Endothelial cell of umbilical vein (primary cell): ENCODE measurements at regions of chr11 and their contacts with region 1.

Region 1: DNA sequence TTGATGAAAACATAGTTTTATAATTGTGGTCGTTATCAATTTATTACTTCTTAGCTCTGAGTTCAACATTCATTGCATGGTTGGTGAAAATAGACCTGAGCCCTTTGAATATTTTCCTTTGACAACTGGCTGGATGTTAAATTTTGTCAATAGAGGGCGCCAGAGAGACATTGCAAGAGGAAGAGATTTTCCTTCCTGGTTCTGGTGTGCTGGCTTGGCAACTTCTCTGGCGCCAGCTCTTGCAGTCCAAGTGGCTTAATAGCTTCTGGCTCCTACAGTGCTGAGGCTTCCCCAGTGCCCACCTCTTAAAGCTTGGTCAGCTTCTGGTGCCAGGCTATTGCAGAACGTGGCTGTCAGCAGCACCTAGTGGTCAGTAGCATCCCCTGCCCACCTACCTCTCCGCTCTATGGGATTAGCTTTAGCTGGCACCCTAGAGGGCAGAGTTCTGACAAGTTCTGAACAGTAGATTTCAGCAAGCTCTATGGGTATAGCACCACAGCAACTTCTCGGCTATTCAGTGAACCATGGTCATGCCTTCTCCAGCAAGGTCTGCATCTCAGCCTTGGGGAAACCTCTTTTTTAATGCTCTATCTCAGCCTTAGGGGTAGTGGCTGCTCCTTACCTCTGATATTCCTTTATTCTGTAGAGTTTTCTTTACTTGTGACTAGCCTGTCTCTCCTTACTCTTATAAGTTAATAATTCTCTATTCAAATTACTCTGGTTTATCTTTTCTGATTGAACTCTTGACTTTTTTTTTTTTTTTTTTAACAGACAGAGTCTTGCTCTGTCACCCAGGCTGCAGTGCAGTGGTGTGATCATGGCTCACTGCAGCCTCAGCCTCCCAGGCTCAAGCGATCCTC is 59.4 kb downstream of the ACER3 start:
- DNase-seq: peak; percentile 77
- H3K4me3 ChIP-seq: no peak overlapping the region
- H3K27ac ChIP-seq: no peak overlapping the region
- H3K4me1 ChIP-seq: peaks cover 7% of the 10 kb centered on the region
- H3K27me3 ChIP-seq: no peaks in the 10 kb centered on the region
- CTCF ChIP-seq: peak; percentile 70 to 77
- POLR2A ChIP-seq: no peak

Region 2: DNA sequence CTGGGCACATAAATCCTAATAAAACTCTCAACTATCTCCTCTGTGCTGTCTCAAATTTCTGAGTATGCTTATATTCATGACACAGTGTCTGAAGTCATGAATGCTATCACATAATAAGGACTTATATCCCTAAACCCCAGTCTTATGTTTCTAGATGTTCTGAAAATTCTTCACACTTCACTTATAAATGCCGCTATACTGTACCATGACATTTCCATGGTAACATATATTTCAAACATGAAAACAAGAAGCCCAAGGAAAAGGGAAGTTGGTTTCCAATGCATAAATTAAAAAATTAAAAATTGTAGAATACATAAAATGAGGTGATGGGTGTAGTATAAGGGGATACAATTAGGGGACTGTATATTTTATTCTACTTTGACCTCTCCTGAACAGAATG is 527.2 kb before region 1 on chr11:
- CTCF ChIA-PET with region 1: no interaction called
- POLR2A ChIA-PET with region 1: no interaction called
- dilution Hi-C with region 1: no loop called
- intact Hi-C with region 1: no loop called
- DNase-seq: no peak
- H3K4me3 ChIP-seq: no peak overlapping the region
- H3K27ac ChIP-seq: no peak overlapping the region
- H3K4me1 ChIP-seq: no peaks in the 10 kb centered on the region
- H3K27me3 ChIP-seq: peaks cover 0 to 3% of the 10 kb centered on the region in 2 experiments
- CTCF ChIP-seq: no peak
- POLR2A ChIP-seq: no peak

Region 3: DNA sequence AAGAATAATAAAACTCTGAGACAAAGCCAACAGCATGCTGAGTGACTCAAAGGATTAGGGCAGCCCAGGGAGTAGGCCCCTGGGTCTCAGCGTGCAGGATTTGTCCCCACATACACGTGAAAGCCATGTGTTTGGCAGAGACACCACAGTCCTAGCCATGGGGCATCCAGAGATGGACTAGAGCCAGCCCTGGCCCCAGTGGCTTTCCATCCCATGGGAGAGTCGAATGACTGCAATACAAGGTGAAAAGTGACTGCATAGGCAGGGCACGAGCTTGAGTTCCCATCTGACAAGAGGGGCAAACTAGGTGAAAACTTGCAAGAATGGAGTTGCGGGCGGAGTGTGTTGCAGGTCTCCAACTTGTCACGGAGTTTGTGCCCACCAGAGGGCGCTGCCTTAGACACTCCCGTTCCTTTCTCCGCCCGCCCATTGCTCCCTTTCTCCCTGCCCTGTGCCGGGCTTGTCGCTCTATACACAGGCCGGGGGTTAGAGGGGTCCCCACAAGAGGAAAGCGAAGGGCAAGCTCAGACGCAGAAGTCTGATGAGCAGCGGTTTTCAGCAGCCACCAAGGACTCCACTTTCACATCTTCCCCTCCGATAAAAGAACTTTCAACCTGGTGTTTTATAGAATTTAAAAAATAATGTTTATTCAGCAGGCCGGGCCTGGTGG is 112.8 kb before region 1 on chr11:
- CTCF ChIA-PET with region 1: interaction called, 338 read pairs
- POLR2A ChIA-PET with region 1: no interaction called
- dilution Hi-C with region 1: loop called (anchors 25 kb)
- intact Hi-C with region 1: loop called (anchors 1 kb)
- DNase-seq: peak; percentile 76
- H3K4me3 ChIP-seq: no peak overlapping the region
- H3K27ac ChIP-seq: no peak overlapping the region
- H3K4me1 ChIP-seq: peaks cover 3% of the 10 kb centered on the region
- H3K27me3 ChIP-seq: no peaks in the 10 kb centered on the region
- CTCF ChIP-seq: peak; percentile 80 to 87
- POLR2A ChIP-seq: no peak

Region 4: DNA sequence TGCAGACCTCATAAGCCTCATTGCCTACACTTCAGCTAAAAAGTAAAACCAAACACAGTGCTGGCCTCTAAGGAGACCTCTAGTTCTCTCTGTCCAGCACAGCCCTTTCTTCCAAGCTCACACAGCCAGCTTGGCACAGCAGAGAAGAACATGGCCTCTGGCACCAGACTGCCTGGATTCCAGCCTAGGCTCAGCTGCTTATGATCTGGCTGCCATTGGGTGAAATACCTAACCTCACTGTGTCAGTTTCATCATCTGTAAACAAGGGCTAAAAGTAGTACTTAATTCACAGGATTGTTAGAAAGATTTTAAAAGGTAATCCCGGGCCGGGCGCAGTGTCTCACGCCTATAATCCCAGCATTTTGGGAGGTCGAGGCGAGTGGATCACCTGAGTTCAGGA is 69.3 kb before region 1 on chr11:
- CTCF ChIA-PET with region 1: interaction called, 39 read pairs
- POLR2A ChIA-PET with region 1: no interaction called
- dilution Hi-C with region 1: no loop called
- intact Hi-C with region 1: no loop called
- DNase-seq: no peak
- H3K4me3 ChIP-seq: no peak overlapping the region
- H3K27ac ChIP-seq: no peak overlapping the region
- H3K4me1 ChIP-seq: no peaks in the 10 kb centered on the region
- H3K27me3 ChIP-seq: no peaks in the 10 kb centered on the region
- CTCF ChIP-seq: no peak
- POLR2A ChIP-seq: no peak

Region 5: GRCh38 chr11:76885390-76886097 is 34.6 kb before region 1 on chr11:
- CTCF ChIA-PET with region 1: interaction called, 71 read pairs
- POLR2A ChIA-PET with region 1: no interaction called
- dilution Hi-C with region 1: no loop called
- intact Hi-C with region 1: loop called (anchors 2 kb)
- DNase-seq: peak; percentile 96
- H3K4me3 ChIP-seq: no peak overlapping the region
- H3K27ac ChIP-seq: peak overlapping the region; percentile 54
- H3K4me1 ChIP-seq: peaks cover 35% of the 10 kb centered on the region
- H3K27me3 ChIP-seq: no peaks in the 10 kb centered on the region
- CTCF ChIP-seq: no peak
- POLR2A ChIP-seq: no peak

Region 6: DNA sequence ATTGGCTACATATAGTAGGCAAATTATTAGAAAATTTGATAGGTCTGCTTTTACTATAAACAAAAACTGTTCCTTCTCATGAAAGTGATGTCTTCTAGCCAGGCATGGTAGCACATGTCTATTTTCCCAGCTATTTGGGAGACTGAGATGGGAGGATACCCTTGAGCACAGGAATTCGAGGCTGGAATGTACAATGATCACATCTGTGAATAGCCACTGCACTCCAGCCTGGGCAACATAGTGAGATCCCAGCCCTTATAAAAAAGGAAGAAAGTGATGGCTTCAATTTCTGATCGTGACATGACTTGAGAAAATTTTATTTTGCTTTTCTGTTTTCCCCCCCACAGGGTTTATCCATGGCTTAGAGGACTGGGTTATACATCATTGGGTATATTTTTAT is 94.6 kb after region 1 on chr11:
- CTCF ChIA-PET with region 1: interaction called, 14 read pairs
- POLR2A ChIA-PET with region 1: no interaction called
- dilution Hi-C with region 1: no loop called
- intact Hi-C with region 1: no loop called
- DNase-seq: no peak
- H3K4me3 ChIP-seq: no peak overlapping the region
- H3K27ac ChIP-seq: no peak overlapping the region
- H3K4me1 ChIP-seq: peaks cover 7% of the 10 kb centered on the region
- H3K27me3 ChIP-seq: no peaks in the 10 kb centered on the region
- CTCF ChIP-seq: no peak
- POLR2A ChIP-seq: no peak

Region 7: GRCh38 chr11:77047007-77047927 is 127.2 kb after region 1 on chr11:
- CTCF ChIA-PET with region 1: interaction called, 62 read pairs
- POLR2A ChIA-PET with region 1: no interaction called
- dilution Hi-C with region 1: no loop called
- intact Hi-C with region 1: no loop called
- DNase-seq: peak; percentile 97
- H3K4me3 ChIP-seq: peak overlapping the region; percentile 28 to 36 (median 31)
- H3K27ac ChIP-seq: no peak overlapping the region
- H3K4me1 ChIP-seq: peaks cover 5% of the 10 kb centered on the region
- H3K27me3 ChIP-seq: peaks cover 4 to 10% of the 10 kb centered on the region in 2 experiments
- CTCF ChIP-seq: peak; percentile 48 to 59
- POLR2A ChIP-seq: no peak

Region 8: DNA sequence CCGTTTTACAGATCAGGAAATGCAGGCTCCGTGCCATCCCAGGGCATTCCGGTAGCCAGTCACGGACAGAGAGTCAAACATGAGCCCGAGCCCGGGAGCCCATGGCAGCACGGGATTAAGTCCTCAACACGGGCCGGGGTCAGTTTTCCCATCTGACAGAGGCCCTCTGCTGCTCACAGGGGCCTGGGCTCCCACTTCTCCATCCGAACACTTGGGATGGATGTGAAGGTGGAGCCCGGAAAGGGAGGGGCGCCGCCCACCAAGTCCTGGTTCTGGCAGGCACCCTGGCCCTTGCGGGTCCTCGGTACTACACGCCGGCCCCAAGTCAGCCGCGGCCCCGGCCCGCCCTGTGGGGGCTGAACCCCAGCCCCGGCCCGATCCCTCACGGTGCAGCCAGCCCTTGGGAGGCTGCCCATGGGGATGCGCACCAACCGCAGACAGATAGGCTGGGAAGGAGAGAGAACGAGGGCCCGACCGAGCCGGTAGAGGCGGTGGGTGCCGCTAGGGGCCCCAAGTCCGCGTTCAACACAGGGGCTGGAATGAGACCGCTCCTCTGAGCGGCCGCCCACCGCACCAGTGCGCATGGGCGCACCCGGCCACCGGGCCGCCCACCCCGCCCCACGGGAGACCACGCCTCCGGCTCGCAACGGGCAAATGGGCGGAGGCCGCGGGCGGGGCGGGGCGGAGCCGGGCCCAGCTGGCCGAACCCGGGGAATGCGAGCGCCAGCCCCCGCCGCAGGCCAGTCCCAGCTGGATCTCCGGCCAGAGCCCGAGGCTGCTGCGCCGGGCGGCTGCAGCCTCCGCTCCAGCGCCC is 146.3 kb after region 1 on chr11 and contains the start of gene CAPN5:
- CTCF ChIA-PET with region 1: no interaction called
- POLR2A ChIA-PET with region 1: no interaction called
- dilution Hi-C with region 1: no loop called
- intact Hi-C with region 1: no loop called
- DNase-seq: peak; percentile 95
- H3K4me3 ChIP-seq: peak within 1 kb of the TSS; percentile 48 to 75 (median 62)
- H3K27ac ChIP-seq: no peak within 1 kb of the TSS
- H3K4me1 ChIP-seq: peaks cover 11% of the 10 kb centered on the region
- H3K27me3 ChIP-seq: no peaks in the 10 kb centered on the region
- CTCF ChIP-seq: peak; percentile 44 to 58
- POLR2A ChIP-seq: peak; percentile 98
- total RNA-seq, gene CAPN5: 14.3 and 15.0 TPM in 2 replicates

Region 9: DNA sequence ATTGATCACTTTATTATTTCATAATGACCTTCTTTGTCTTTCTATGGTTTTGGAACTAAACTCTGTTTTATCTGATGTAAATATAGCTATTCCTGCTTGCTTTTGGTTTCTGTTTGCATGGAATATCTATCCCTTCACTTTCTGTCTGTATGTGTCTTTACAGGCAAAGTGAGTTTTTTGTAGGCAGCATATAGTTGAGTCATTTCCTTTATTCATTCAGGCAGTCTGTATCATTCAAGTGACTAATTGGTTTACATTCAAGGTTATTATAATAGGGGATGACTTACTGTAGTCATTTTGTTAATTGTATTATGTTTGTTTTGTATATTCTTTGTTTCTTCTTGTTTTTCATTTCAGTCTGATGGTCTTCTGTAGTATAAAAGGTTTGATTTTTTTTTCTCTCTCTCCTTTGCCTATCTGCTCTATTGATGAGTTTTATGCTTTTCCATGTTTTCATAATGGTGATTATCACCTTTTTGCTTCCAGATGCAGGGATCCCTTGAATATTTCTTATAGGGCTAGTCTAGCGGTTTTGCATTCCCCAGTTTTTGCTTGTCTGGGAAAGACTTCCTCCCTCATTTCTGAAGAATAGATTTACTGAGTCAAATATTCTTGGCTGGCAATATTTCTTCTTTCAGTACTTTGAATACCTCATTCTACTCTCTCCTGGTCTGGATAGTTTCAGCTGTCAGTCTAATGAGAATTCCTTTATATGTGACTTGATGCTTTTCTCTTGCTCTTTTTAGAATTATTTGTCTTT is 330.9 kb after region 1 on chr11:
- CTCF ChIA-PET with region 1: no interaction called
- POLR2A ChIA-PET with region 1: no interaction called
- dilution Hi-C with region 1: no loop called
- intact Hi-C with region 1: no loop called
- DNase-seq: peak; percentile 73
- H3K4me3 ChIP-seq: peak overlapping the region in 1 of 3 experiments; percentile 10
- H3K27ac ChIP-seq: peak overlapping the region; percentile 73
- H3K4me1 ChIP-seq: peaks cover 25% of the 10 kb centered on the region
- H3K27me3 ChIP-seq: no peaks in the 10 kb centered on the region
- CTCF ChIP-seq: no peak
- POLR2A ChIP-seq: peak; percentile 18